Mammary epithelial cell (primary cell): ENCODE measurements at regions of chr16 and their contacts with region 1.

Region 1: DNA sequence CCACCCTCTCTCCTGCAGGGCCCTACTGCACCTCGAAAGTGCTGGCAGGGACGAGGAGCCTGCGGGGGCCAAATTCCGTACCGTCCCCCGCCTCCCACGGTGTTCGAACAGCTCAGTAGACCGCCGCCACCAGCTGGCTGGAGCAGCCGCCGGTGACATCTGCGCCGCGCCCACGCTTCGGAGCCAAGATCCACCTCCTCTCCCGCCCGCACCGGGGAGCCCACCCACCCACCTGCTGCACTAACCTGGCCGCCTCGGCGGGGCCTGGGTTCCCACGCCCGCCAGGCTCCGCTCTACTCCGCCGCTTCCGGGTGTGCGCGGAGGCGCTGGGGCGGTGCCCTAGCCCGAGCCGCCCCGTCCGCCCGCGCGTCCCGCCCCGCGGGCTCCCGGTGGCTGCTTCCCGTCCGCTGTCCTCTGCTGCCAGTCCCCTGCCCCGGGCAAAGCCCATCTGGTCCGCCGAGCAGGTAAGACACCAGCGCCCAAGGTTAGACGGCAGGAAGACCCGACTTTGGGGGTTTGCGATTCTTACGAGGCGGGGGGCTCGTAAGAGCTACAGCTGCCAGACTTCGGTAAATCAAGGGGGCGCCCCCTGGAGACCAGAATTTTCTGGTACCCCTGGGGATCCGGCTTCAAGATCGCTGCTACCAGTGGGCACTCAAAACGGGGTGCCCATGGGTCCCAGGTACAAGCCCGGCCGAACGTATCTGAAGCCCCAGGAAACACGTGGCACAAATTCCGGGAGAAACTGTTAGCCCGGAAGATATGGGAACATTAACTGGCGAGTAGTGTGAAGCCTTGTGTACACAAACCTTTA is at the starts of genes FBXL8 and TRADD:
- DNase-seq: peak; percentile 73
- H3K4me3 ChIP-seq: peak within 1 kb of the TSS; percentile 64 to 99 (median 72)
- H3K27ac ChIP-seq: peak within 1 kb of the TSS; percentile 40
- H3K4me1 ChIP-seq: peaks cover 15% of the 10 kb centered on the region
- H3K27me3 ChIP-seq: no peaks in the 10 kb centered on the region
- CTCF ChIP-seq: peak; percentile 4 to 54
- total RNA-seq, gene FBXL8: 12.0 to 14.6 TPM
- total RNA-seq, gene TRADD: 17.8 to 18.6 TPM

Region 2: DNA sequence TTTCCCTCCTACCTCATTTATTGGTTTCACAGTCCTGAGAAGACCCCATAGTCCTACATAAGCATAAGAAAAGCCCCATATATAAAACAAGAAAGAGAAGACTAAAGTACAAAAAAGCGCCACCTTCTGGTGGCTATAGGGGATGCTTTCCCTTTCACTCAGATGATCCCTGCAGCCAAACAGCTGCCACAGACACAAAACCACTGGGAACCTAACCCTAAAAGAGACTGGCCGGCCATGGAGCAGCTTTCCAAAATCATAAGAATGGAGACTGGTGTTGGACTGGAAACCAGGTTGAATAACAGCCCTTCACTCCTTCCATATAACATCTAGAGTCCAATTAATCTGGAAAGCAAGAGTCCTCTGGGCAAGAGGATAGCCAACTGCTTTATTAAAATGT is 419.8 kb before region 1 on chr16:
- CTCF ChIA-PET with region 1: no interaction called
- dilution Hi-C with region 1: no loop called
- in situ Hi-C with region 1: no loop called
- intact Hi-C with region 1: no loop called
- DNase-seq: peak; percentile 23
- H3K4me3 ChIP-seq: no peak overlapping the region
- H3K27ac ChIP-seq: no peak overlapping the region
- H3K4me1 ChIP-seq: peaks cover 34% of the 10 kb centered on the region
- H3K27me3 ChIP-seq: no peaks in the 10 kb centered on the region
- CTCF ChIP-seq: peak; percentile 59 to 72

Region 3: DNA sequence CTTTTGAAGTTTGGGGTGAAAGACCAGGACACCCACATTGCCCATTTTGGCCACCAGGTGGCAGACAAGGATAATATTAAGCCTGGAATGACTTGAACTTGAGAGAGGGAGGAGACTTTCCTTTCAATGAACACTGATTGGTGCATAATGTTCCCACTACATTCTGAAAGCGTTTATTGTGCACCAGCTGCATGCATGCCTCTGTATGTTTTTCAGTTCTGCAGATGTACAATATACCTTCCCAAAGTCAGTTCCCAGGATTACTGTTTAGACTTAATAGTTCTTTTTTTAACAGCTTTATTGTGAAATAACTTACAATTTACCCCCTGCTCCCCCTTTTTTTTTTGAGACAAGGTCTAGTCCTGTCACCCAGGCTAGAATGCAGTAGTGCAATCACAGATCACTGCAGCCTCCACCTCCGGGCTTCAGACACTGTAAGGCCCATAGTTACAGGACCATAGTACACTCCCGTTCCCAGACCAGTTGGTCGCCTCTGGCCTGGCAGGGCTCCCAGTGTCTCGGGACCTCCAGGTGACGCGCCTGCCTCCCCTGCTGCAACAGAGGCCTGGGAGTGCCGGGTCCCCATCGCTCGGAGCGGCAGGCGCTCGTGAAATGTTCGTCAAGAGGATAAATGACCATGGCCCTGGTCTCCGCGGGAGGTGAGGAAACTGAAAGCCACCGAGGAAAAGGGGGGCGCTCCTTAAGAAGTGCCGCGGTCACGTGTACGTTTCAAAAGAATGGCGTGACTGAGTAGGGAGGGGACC is 212.3 kb before region 1 on chr16:
- CTCF ChIA-PET with region 1: no interaction called
- dilution Hi-C with region 1: no loop called
- in situ Hi-C with region 1: no loop called
- intact Hi-C with region 1: loop called (anchors 2 kb)
- DNase-seq: peak; percentile 78
- H3K4me3 ChIP-seq: peak overlapping the region; percentile 66 to 69 (median 68)
- H3K27ac ChIP-seq: peak overlapping the region; percentile 49
- H3K4me1 ChIP-seq: peaks cover 22% of the 10 kb centered on the region
- H3K27me3 ChIP-seq: no peaks in the 10 kb centered on the region
- CTCF ChIP-seq: peak; percentile 84 to 94

Region 4: DNA sequence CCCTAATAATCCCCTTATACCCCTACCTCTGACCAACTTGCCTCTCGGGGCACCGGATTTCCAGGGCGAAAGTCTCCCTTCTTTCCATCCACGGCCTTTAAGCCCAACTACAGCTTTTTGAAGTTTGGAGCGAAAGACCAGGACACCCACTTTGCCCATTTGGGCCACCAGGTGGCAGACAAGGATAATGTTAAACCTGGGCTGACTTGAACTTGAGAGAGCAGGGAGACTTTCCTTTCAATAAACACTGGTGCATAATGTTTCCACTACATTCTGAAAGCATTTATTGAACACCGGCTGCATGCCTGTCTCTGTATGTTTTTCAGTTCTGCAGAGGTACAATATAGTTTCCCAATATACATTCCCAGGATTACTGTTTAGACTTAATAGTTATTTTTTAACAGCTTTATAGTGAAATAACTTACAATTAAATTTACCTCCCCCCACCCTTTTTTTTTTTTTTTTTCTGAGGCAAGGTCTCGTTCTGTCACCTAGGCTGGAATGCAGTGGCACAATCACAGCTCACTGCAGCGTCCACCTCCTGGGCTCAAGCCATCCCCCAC is 205.6 kb before region 1 on chr16:
- CTCF ChIA-PET with region 1: interaction called, 3 read pairs
- dilution Hi-C with region 1: no loop called
- in situ Hi-C with region 1: no loop called
- intact Hi-C with region 1: loop called (anchors 2 kb)
- DNase-seq: peak; percentile 68
- H3K4me3 ChIP-seq: no peak overlapping the region
- H3K27ac ChIP-seq: no peak overlapping the region
- H3K4me1 ChIP-seq: peaks cover 16% of the 10 kb centered on the region
- H3K27me3 ChIP-seq: no peaks in the 10 kb centered on the region
- CTCF ChIP-seq: peak; percentile 83 to 86

Region 5: GRCh38 chr16:67109407-67110135 is 50.2 kb before region 1 on chr16 and contains the start of gene PHAF1:
- CTCF ChIA-PET with region 1: no interaction called
- dilution Hi-C with region 1: no loop called
- in situ Hi-C with region 1: no loop called
- intact Hi-C with region 1: loop called (anchors 5 kb)
- DNase-seq: peak; percentile 93
- H3K4me3 ChIP-seq: peak within 1 kb of the TSS; percentile 67 to 91 (median 89)
- H3K27ac ChIP-seq: peak within 1 kb of the TSS; percentile 62
- H3K4me1 ChIP-seq: peaks cover 20% of the 10 kb centered on the region
- H3K27me3 ChIP-seq: no peaks in the 10 kb centered on the region
- CTCF ChIP-seq: no peak
- total RNA-seq, gene PHAF1: 12.5 to 13.5 TPM

Region 6: GRCh38 chr16:67170168-67170947 is 10.6 kb after region 1 on chr16 and contains the start of gene NOL3:
- CTCF ChIA-PET with region 1: interaction called, 8 read pairs
- dilution Hi-C with region 1: no loop called
- in situ Hi-C with region 1: no loop called
- intact Hi-C with region 1: loop called (anchors 1 kb)
- DNase-seq: peak; percentile 73
- H3K4me3 ChIP-seq: peak within 1 kb of the TSS; percentile 49 to 58 (median 54)
- H3K27ac ChIP-seq: peak within 1 kb of the TSS; percentile 70
- H3K4me1 ChIP-seq: peaks cover 47% of the 10 kb centered on the region
- H3K27me3 ChIP-seq: no peaks in the 10 kb centered on the region
- CTCF ChIP-seq: no peak
- total RNA-seq, gene NOL3: 30.0 to 41.9 TPM

Region 7: DNA sequence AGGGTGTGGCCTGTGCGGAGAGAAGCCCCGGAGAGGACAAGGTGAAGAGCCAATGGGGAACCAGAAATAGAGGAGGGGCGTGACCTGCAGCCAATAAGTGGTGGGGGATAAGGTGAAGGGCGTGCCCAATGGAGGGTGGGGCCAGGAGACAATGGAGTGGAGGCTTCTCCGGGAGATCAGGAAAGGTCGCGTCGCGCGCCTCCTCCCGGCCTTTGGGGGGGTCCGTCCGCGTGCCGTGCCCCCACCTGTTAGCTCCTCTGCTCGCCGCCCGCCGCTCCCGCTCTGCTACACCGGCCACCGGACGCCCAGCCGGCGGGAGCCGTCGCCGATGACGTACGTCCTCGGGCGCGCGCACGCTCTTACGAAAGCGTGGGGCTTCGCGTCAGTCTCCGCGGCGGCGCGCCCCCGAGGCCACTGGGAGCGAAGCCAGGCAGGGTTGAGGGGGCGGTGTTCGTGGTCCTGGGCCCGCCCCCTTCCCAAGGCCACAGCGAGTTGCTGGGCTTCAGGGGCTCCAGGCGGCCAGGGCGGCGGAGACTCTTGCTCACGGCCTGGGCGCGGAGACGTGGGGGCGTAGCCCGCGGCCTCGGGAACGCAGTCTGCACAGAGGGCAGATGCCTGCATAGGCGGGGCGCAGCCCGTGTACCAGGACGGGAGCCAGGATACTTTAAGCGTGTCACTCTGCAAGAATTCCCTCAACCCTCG is 24.0 kb after region 1 on chr16 and contains the start of gene MATCAP1:
- CTCF ChIA-PET with region 1: no interaction called
- dilution Hi-C with region 1: no loop called
- in situ Hi-C with region 1: no loop called
- intact Hi-C with region 1: loop called (anchors 1 kb)
- DNase-seq: peak; percentile 97
- H3K4me3 ChIP-seq: peak within 1 kb of the TSS; percentile 43 to 82 (median 69)
- H3K27ac ChIP-seq: peak within 1 kb of the TSS; percentile 76
- H3K4me1 ChIP-seq: peaks cover 49% of the 10 kb centered on the region
- H3K27me3 ChIP-seq: no peaks in the 10 kb centered on the region
- CTCF ChIP-seq: no peak
- total RNA-seq, gene MATCAP1: 8.0 to 24.9 TPM

Region 8: DNA sequence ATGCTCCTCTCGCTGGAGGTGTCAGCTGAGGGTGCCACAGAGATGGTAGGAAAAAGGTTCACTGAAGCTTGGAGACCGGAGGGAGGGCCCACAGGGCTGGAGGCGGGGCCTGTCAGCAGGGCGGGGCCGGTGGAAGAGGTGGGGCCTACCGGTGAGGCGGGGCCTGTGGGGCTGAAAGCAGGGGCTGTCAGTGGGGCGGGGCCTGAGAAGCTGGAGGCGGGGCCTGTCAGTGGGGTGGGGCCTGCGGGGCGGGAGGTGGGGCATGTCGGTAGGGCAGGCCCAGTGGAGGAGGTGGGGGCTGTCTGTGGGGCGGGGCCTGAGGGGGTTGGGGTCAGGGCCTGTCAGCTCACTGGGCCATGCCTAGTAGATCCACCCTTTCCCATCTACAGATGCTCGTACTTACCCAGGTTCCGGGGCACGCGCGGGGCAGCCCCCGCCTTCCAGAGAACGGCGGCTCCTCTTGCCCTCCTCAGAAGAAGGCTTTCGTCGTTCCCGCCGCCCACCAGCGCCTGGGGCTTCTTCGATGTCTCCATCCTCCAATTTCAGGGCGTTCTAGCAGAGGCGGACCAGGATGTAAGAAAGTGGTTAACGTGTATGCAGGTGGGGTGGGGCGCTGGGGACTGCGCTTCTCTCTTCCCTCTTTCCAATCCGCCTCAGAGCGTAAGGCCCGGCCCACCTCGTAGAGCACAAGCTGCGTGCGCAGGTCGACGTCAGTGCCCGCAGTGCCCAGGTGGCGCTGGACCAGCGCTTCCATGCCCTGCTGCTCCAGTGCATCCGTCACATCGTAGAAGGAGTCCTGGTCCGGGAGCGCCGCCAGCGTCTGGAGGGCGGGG is 77.0 kb after region 1 on chr16:
- CTCF ChIA-PET with region 1: no interaction called
- dilution Hi-C with region 1: no loop called
- in situ Hi-C with region 1: no loop called
- intact Hi-C with region 1: no loop called
- DNase-seq: peak; percentile 71
- H3K4me3 ChIP-seq: no peak overlapping the region
- H3K27ac ChIP-seq: no peak overlapping the region
- H3K4me1 ChIP-seq: peaks cover 28% of the 10 kb centered on the region
- H3K27me3 ChIP-seq: no peaks in the 10 kb centered on the region
- CTCF ChIP-seq: no peak